Activated T-helper 1 cell treated with anti-CD3 and anti-CD28 coated beads, Interleukin-12 subunit alpha, Interleukin-12 subunit beta, Interleukin-2, Interleukin-4 antibody, amounts not matched to agents 30 ng/mL and 10 ng/mL and 1 ng/mL, durations not matched to agents 14 hours and 24 hours and 36 hours (primary cell): ENCODE measurements at regions of chr4 and their contacts with region 1.

Region 1: DNA sequence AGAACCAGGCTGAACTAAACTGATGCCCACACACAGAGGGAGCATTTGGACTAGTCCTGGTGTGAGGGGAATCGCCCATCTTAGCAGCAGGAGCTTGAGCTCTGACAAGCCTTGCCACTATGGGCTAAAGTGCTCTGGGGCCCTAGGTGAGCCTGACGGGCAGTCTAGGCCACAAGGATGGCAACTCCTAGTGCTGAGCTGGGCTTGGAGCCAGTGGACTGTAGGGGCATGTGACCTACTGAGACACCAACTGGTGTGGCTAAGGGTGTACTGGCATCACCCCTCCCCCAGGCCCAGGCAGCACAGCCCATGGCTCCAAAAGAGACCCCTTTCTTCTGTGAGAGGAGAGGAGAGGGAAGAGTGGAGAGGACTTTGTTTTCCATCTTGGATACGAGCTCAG is 14.5 kb downstream of the CENPU start:
- DNase-seq: no peak
- H3K4me3 Mint-ChIP-seq: no peak overlapping the region
- H3K27ac Mint-ChIP-seq: no peak overlapping the region
- H3K4me1 Mint-ChIP-seq: peaks cover 55% of the 10 kb centered on the region
- H3K27me3 Mint-ChIP-seq: no peaks in the 10 kb centered on the region

Region 2: DNA sequence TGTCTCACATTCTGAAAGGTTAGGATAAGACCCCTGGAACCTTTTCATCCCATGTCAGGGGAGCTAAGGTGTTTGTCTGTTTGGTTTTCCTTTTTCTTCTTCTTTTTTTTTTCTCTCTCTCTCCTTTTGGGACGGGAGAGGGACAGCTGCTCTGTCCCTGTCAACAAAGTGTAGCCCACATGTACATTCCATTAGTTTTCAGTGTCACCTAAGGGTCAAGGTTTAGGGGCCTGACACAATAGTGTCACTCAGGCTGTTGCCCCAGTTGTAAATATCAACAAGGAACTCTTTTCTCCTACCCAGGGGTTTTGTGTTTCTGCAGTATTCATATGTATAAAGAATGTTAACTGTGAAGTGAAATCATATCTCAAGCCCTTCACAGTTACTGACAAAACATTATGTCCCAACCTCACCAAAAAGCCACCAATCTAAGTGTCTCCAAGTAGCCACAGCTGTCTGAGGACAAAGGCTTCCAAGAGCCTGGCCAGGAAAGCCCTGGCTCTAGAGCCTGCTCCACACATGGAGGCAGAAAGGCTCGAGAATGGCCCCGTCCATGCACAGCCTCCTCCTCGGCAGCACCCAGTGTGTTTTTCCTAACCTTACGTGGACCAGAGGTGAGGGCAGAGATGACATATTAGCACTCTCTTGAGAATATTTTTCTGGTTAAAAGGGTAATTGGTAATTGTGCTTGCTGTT is 254.5 kb before region 1 on chr4:
- intact Hi-C with region 1: loop called (anchors 5 kb)
- DNase-seq: no peak
- H3K4me3 Mint-ChIP-seq: no peak overlapping the region
- H3K27ac Mint-ChIP-seq: no peak overlapping the region
- H3K4me1 Mint-ChIP-seq: peaks cover 67% of the 10 kb centered on the region
- H3K27me3 Mint-ChIP-seq: no peaks in the 10 kb centered on the region

Region 3: DNA sequence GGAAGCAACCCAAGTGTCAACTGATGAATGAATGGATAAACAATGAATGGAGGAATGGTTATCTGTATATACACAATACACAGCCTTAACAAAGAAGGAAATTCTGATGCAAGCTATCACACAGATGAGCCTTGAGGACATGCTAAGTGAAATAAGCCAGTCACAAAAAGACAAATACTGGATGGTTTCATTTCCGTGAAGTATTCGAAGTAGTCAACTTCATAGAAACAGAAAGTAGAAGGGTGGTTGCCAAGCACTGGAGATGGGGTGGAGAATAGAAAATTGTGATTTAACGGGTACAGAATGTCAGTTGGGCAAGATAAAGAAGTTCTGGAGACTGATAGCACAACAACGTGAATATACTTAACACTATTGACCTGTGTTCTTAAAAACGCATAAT is 13.7 kb before region 1 on chr4:
- intact Hi-C with region 1: loop called (anchors 2 kb)
- DNase-seq: no peak
- H3K4me3 Mint-ChIP-seq: peak overlapping the region; percentile 8
- H3K27ac Mint-ChIP-seq: peak overlapping the region; percentile 32
- H3K4me1 Mint-ChIP-seq: peaks cover 27% of the 10 kb centered on the region
- H3K27me3 Mint-ChIP-seq: no peaks in the 10 kb centered on the region